Left ventricle myocardium inferior (tissue), 1 donor: ENCODE measurements at regions of chr3 and their contacts with region 1.

Region 1: GRCh38 chr3:127747723-127748521 is 74.4 kb downstream of the MGLL start:
- DNase-seq: peak; percentile 76
- H3K4me3 ChIP-seq: peak overlapping the region; percentile 11
- H3K27ac ChIP-seq: peak overlapping the region; percentile 96
- H3K4me1 ChIP-seq: peaks cover 89% of the 10 kb centered on the region
- H3K27me3 ChIP-seq: no peaks in the 10 kb centered on the region
- CTCF ChIP-seq: peak; percentile 29

Region 2: GRCh38 chr3:127512256-127512655 is 235.7 kb before region 1 on chr3:
- intact Hi-C with region 1: no loop called
- DNase-seq: no peak
- H3K4me3 ChIP-seq: no peak overlapping the region
- H3K27ac ChIP-seq: no peak overlapping the region
- H3K4me1 ChIP-seq: no peaks in the 10 kb centered on the region
- H3K27me3 ChIP-seq: peaks cover 6% of the 10 kb centered on the region
- CTCF ChIP-seq: no peak

Region 3: GRCh38 chr3:127574880-127575878 is 172.7 kb before region 1 on chr3:
- intact Hi-C with region 1: no loop called
- DNase-seq: peak; percentile 79
- H3K4me3 ChIP-seq: no peak overlapping the region
- H3K27ac ChIP-seq: no peak overlapping the region
- H3K4me1 ChIP-seq: peaks cover 20% of the 10 kb centered on the region
- H3K27me3 ChIP-seq: no peaks in the 10 kb centered on the region
- CTCF ChIP-seq: peak; percentile 97

Region 4: GRCh38 chr3:127697551-127698240 is 50.2 kb before region 1 on chr3:
- intact Hi-C with region 1: loop called (anchors 10 kb)
- DNase-seq: peak; percentile 88
- H3K4me3 ChIP-seq: peak overlapping the region; percentile 41
- H3K27ac ChIP-seq: peak overlapping the region; percentile 96
- H3K4me1 ChIP-seq: peaks cover 95% of the 10 kb centered on the region
- H3K27me3 ChIP-seq: no peaks in the 10 kb centered on the region
- CTCF ChIP-seq: no peak

Region 5: DNA sequence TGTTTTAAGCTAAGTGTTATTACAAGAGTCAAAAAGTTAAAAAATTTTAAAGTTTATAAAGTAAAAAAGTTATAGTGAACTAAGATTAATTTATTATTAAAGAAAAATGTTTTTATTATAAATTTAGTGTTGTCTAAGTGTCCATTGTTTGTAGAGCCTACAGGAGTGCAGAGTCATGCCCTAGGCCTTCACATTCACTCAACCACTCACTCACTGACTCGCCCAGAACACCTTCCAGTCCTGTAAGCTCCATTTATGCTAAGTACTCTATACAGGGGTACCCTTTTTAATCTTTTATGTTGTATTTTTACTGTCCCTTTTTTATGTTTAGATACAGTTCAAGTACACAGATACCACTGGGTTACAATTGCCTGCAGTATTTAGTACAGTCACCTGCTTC is 442.6 kb after region 1 on chr3:
- intact Hi-C with region 1: no loop called
- DNase-seq: no peak
- H3K4me3 ChIP-seq: no peak overlapping the region
- H3K27ac ChIP-seq: no peak overlapping the region
- H3K4me1 ChIP-seq: peaks cover 25% of the 10 kb centered on the region
- H3K27me3 ChIP-seq: no peaks in the 10 kb centered on the region
- CTCF ChIP-seq: no peak